ENCODE measurements at regions of chr3 and their contacts with region 1.

Region 1: DNA sequence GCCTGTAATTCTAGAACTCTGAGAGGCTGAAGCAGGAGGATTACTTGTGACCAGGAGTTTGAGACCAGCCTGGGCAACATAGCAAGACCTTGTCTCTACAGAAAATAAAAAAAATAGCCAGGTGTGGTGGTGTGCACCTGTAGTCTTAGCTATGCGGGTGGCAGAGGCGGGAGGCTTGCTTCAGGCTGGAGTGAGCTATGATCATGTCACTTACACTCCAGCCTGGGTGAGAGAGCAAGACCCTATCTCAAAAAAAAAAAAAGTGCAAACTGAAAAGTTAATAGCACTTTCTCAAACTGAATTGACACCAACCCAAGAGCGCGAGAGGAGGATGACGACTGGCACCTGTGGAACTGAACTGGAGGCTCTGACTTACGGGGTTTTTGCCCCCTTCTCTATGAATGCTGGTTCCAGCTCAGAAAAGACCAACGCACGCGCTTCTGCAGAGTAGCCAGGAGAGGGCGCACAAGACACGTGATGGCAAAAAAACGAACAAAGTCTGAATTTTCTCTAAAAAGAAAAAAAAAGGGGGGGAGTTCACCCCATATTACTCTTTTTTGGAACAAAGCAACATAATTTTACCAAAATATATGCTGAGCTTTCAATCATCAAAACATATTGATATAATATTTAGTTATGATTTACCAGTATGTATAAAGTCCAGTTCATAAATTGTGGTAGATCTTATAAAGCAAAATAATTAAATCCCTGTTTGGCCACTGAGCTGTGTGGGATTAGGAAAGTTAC is 23.7 kb downstream of the CFAP92 start:
- DNase-seq: no peak
- H3K4me3 ChIP-seq: no peak overlapping the region
- H3K27ac ChIP-seq: peak overlapping the region; percentile 21
- H3K27me3 ChIP-seq: peaks cover 14% of the 10 kb centered on the region
- CTCF ChIP-seq: peak; percentile 95

Region 2: DNA sequence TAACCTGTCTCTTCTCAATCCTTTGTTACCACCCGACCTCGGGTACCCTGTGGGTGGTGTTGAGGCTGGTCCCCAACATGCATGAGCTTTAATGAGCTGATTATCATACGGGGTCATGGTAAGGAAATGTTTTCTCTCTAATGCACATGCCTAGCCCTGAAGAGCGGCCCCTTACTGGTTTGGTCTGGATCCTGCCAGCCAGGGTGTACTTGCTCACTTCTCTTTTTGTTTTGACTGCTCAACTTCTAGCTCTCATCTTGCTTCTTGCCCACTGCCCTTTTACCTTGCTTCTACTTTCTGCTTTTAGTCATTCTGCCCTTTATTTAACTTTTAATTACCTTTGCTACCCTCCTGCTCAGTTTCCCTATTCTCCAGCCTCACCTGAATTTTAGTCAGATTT is 135.1 kb before region 1 on chr3:
- CTCF ChIA-PET with region 1: no interaction called
- POLR2A ChIA-PET with region 1: no interaction called
- DNase-seq: no peak
- H3K4me3 ChIP-seq: no peak overlapping the region
- H3K27ac ChIP-seq: no peak overlapping the region
- H3K27me3 ChIP-seq: peaks cover 10% of the 10 kb centered on the region
- CTCF ChIP-seq: no peak

Region 3: DNA sequence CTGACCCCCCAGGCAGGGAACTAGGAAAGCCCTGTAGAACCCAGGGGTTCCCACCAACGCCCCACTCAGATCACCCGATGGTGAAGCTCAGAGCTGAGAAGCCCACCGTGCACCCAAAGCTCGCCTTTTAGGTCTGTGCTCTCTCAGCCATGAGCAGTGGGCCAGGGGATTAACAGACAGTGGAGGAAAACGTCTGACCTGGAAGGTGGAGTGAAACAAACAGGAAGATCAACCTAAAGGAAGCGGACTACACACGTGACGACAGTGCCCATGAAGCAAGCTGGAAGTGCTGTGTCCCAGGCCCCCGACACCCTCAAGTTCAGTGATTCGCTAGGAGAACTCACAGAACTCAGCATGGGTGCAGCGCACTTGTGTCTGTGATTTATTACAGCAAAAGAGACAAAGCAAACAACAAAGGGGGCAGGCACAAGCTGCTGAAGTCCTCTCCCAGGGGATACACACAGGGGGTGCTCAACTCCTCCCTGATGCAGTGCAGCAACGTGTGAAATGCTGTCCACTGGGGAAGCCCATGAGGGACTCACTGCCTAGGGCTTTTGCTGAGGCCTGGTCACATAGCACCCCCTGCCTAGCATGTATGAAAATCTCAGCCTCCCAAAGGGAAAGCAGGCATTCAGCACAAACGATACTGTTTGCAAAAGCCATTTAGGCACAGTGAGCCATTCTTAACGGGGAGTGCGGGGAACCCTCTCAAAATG is 19.8 kb before region 1 on chr3:
- CTCF ChIA-PET with region 1: interaction called, 19 read pairs
- POLR2A ChIA-PET with region 1: no interaction called
- DNase-seq: no peak
- H3K4me3 ChIP-seq: no peak overlapping the region
- H3K27ac ChIP-seq: no peak overlapping the region
- H3K27me3 ChIP-seq: peaks cover 8% of the 10 kb centered on the region
- CTCF ChIP-seq: peak; percentile 50

Region 4: DNA sequence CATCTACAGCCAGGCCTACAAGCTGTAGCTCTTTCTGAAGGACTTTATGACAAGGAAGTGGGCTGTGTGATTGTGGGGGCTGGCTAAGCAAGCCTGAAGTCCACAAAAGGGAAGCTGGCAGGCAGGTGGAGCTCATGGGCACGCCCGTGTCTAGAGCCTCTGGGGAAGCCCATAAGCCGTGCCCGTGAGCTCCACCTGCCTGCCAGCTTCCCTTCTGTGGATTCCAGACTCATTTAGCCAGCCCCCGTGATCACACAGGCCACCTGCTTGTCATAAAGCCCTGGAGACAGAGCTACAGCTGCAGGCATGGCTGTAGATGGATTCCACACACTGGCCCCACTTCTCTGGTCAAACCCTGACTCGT is 46.2 kb after region 1 on chr3:
- CTCF ChIA-PET with region 1: interaction called, 20 read pairs
- POLR2A ChIA-PET with region 1: interaction called, 5 read pairs
- DNase-seq: no peak
- H3K4me3 ChIP-seq: no peak overlapping the region
- H3K27ac ChIP-seq: no peak overlapping the region
- H3K27me3 ChIP-seq: no peaks in the 10 kb centered on the region
- CTCF ChIP-seq: no peak

Region 5: DNA sequence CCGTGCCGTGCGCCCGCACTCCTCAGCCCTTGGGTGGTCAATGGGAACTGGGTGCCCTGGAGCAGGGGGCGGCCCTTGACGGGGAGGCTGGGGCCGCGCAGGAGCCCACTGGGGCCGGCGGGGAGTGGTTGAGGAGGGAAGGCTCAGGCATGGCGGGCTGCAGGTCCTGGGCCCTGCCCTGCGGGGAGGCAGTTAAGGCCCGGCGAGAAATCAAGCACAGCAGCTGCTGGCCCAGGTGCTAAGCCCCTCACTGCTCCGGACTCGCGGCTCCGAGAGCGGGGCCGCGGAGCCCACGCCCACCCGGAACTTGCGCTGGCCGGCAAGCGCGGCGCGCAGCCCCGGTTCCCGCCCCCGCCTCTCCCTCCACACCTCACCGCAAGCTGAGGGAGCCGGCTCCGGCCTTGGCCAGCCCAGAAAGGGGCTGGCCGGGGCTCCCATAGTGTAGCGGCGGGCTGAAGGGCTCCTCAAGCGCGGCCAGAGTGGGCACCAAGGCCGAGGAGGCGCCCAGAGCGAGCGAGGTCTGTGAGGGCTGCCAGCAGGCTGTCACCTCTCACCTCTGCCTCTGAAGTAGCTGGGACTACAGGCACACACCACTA is 98.2 kb after region 1 on chr3:
- CTCF ChIA-PET with region 1: interaction called, 24 read pairs
- POLR2A ChIA-PET with region 1: no interaction called
- DNase-seq: no peak
- H3K4me3 ChIP-seq: peak overlapping the region; percentile 41; the same call in 1 of the 2 replicates
- H3K27ac ChIP-seq: no peak overlapping the region
- H3K27me3 ChIP-seq: peaks cover 4% of the 10 kb centered on the region
- CTCF ChIP-seq: no peak

Region 6: DNA sequence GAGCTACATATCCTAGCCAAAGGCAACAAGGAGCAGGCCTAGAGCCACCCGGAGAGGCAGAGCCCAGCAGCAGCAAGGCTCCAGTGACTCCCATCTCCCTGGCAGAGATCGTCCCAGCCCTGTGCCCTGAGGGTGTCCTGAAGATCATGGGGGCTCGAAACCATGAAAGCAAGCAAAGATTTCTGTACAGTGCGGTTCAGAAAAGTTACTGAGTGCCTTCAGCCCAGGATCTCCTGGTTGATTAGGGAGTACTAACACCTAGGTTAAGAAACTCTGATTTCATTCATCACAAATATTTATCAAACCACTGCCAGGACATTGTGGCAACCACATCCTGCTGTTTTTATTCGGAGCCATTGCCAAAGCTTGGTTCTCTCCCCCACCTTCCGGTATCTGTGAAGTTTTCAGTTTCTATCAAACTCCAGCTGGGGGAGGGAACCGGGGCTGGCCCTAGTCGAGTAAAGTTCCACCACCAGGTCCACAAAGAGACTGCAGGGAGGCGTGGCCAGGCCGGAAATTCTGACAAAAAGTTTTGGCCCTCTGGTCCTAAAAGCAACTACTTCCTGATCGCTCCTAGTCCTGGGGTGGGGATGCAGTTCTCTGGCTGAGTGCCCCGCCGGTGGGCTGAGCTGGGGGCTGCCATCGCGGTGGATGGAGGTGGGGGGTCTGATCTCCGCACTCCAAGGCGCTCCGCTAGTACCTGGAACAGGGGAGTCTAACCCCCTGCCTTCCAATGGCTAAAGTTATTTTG is 150.3 kb after region 1 on chr3:
- CTCF ChIA-PET with region 1: interaction called, 84 read pairs
- POLR2A ChIA-PET with region 1: no interaction called
- DNase-seq: peak; percentile 55
- H3K4me3 ChIP-seq: peak overlapping the region; percentile 84
- H3K27ac ChIP-seq: peak overlapping the region; percentile 70
- H3K27me3 ChIP-seq: no peaks in the 10 kb centered on the region
- CTCF ChIP-seq: 0 out of 2 replicates have a peak, but pooled peaks have one; percentile 29

Region 7: GRCh38 chr3:129166579-129167332 is 196.6 kb after region 1 on chr3:
- CTCF ChIA-PET with region 1: interaction called, 13 read pairs
- POLR2A ChIA-PET with region 1: interaction called, 4 read pairs
- DNase-seq: no peak
- H3K4me3 ChIP-seq: no peak overlapping the region
- H3K27ac ChIP-seq: no peak overlapping the region
- H3K27me3 ChIP-seq: no peaks in the 10 kb centered on the region
- CTCF ChIP-seq: no peak

Region 8: DNA sequence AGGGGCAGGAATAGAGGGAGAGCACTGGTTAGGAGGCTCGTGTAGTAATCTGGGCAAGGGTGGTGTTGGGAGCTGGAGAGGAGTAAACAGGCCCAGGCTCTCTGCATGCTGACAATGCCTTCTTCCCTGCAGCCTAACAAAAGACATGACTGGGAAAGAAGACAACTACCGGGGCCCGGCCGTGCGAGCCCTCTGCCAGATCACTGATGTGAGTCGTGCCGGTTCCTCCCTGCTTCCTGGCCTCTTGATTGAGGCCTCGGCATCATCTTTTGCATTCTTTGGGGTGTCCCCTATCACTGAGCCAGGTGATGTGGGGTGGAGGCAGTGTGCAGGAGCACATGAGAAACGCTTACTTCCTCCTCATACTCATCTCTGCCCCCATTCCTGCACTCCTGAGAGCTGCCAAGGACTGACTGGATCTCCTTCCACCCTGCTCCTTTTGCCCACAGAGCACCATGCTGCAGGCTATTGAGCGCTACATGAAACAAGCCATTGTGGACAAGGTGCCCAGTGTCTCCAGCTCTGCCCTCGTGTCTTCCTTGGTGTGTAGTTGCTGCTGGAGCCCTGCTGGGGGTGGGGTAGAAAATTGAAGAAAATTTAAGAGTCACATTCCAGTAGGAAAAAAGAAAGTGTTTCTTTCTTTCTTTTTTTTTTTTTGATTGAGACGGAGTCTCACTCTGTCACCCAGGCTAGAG is 284.5 kb after region 1 on chr3:
- CTCF ChIA-PET with region 1: interaction called, 13 read pairs
- POLR2A ChIA-PET with region 1: interaction called, 3 read pairs
- DNase-seq: no peak
- H3K4me3 ChIP-seq: no peak overlapping the region
- H3K27ac ChIP-seq: no peak overlapping the region
- H3K27me3 ChIP-seq: no peaks in the 10 kb centered on the region
- CTCF ChIP-seq: no peak